ENCODE measurements at regions of chr14 and their contacts with region 1.

Region 1: GRCh38 chr14:102774391-102775153 is 2.7 kb upstream of the TRAF3 start:
- DNase-seq: peak; percentile 96
- ATAC-seq: peak; percentile 76
- H3K4me3 ChIP-seq: peak overlapping the region; percentile 35; the same call in 1 of the 2 replicates
- H3K27ac ChIP-seq: peak overlapping the region; percentile 89
- H3K4me1 ChIP-seq: peaks cover 40% of the 10 kb centered on the region
- H3K27me3 ChIP-seq: no peaks in the 10 kb centered on the region
- CTCF ChIP-seq: peak; percentile 77 to 86 (median 85)
- EP300 ChIP-seq: peak; percentile 32 to 75; a peak in 2 of 4 replicates
- POLR2A ChIP-seq: no peak
- RAD21 ChIP-seq: peak; percentile 77

Region 2: DNA sequence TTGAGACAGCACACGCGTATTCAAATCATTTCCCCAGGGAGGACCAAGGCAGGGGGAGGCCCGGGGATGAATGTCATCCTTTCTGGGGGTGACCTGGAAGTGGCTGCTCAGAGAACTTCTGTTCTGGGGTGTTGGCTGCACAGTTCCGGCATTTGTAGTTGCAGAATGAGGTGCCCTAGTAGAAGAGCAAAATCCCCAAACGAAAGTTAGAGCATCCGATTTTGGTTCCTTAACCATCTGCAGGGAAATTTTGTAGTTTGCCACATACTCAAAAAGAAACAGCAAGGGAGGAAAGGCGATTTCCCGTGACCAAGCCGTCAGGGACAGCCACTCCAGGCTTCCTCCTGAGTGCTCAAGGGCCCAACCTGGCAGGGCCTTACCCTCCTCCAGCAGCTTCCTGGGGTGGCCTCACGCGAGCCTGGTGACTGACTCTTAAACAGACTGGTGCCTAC is 10.3 kb before region 1 on chr14:
- CTCF ChIA-PET with region 1: interaction called, 23 read pairs
- POLR2A ChIA-PET with region 1: interaction called, 12 read pairs
- RAD21 ChIA-PET with region 1: interaction called, 24 read pairs
- SMC1A ChIA-PET with region 1: interaction called, 22 read pairs
- in situ Hi-C with region 1: no loop called
- intact Hi-C with region 1: loop called (anchors 1 kb)
- DNase-seq: peak; percentile 97
- ATAC-seq: peak; percentile 76
- H3K4me3 ChIP-seq: no peak overlapping the region
- H3K27ac ChIP-seq: peak overlapping the region; percentile 92
- H3K4me1 ChIP-seq: peaks cover 51% of the 10 kb centered on the region
- H3K27me3 ChIP-seq: no peaks in the 10 kb centered on the region
- CTCF ChIP-seq: no peak
- EP300 ChIP-seq: peak; percentile 51 to 73; a peak in 2 of 4 replicates
- POLR2A ChIP-seq: no peak
- RAD21 ChIP-seq: no peak

Region 3: DNA sequence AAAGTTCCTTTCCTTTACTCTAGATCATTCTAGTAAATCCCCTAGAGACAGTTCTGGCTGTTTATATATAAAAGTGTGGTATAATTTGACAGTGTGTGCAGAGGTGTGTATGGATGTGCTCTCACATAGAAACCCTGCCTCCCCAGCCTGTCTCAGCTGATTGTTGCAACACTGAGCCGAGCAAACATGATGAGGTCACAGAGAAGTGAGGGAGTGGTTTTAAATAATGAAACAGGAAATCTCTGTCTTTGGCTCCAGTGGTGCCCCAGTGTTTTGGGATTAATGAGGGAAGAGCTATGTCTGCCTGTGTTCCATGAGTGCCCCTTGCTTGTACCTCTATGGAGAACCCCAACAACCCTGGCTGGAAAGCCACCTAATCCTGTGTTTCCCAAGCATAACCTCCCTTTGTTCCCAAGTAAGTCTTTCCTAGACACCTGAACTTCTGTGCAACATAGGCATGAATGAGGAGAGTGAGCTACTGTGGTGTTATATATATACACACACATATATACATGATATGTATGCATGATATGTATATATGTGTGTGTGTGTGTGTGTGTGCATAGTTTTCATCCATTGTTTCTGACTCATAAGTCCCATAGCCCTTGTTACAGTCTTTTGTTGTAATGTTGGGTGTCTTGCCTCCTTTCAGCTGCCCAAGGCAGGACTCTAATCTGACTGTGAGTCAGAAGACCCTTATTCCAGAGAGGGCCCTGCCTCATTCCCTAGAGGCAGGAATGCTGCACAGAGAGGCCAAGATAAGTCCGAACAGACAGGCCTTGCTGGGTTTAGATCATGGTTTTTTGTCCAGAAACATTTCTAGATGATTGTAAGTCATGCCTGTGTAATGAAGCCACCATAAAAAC is 20.7 kb after region 1 on chr14:
- CTCF ChIA-PET with region 1: interaction called, 7 read pairs
- POLR2A ChIA-PET with region 1: interaction called, 8 read pairs
- RAD21 ChIA-PET with region 1: interaction called, 20 read pairs
- SMC1A ChIA-PET with region 1: interaction called, 12 read pairs
- in situ Hi-C with region 1: no loop called
- intact Hi-C with region 1: no loop called
- DNase-seq: no peak
- ATAC-seq: peak; percentile 66
- H3K4me3 ChIP-seq: no peak overlapping the region
- H3K27ac ChIP-seq: peak overlapping the region; percentile 42
- H3K4me1 ChIP-seq: peaks cover 57% of the 10 kb centered on the region
- H3K27me3 ChIP-seq: no peaks in the 10 kb centered on the region
- CTCF ChIP-seq: no peak
- EP300 ChIP-seq: 0 out of 4 replicates have a peak, but pooled peaks of 1 of the 2 experiments have one; percentile 10
- POLR2A ChIP-seq: no peak
- RAD21 ChIP-seq: no peak

Region 4: GRCh38 chr14:102900631-102901571 is 126.3 kb after region 1 on chr14:
- CTCF ChIA-PET with region 1: interaction called, 18 read pairs
- POLR2A ChIA-PET with region 1: interaction called, 7 read pairs
- RAD21 ChIA-PET with region 1: no interaction called
- SMC1A ChIA-PET with region 1: interaction called, 10 read pairs
- in situ Hi-C with region 1: no loop called
- intact Hi-C with region 1: loop called (anchors 5 kb)
- DNase-seq: no peak
- ATAC-seq: peak; percentile 76
- H3K4me3 ChIP-seq: peak overlapping the region; percentile 43
- H3K27ac ChIP-seq: peak overlapping the region; percentile 98
- H3K4me1 ChIP-seq: peaks cover 59% of the 10 kb centered on the region
- H3K27me3 ChIP-seq: no peaks in the 10 kb centered on the region
- CTCF ChIP-seq: no peak
- EP300 ChIP-seq: no peak; a peak in 2 of 4 replicates
- POLR2A ChIP-seq: peak; percentile 61
- RAD21 ChIP-seq: no peak

Region 5: DNA sequence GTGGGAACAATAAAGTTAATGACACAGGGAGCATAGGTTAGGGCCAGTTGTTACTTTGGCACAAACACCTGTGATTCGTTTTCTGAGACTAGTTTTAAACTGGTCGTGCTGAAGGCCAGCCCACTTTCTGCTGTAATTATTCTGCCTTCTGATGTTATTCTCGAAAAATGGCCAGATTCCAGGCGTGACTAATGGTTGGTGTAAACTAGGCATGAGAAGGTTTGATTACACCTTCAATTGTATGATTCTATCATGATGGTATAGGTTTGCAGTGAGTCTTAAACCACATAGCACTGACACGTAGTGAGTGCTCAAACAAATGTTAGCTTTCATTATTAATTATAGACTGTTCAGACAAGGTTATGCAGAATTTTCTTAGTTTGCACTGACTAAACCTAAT is 709.0 kb after region 1 on chr14:
- CTCF ChIA-PET with region 1: no interaction called
- POLR2A ChIA-PET with region 1: no interaction called
- RAD21 ChIA-PET with region 1: no interaction called
- SMC1A ChIA-PET with region 1: no interaction called
- in situ Hi-C with region 1: no loop called
- intact Hi-C with region 1: no loop called
- DNase-seq: no peak
- ATAC-seq: no peak
- H3K4me3 ChIP-seq: no peak overlapping the region
- H3K27ac ChIP-seq: no peak overlapping the region
- H3K4me1 ChIP-seq: peaks cover 9% of the 10 kb centered on the region
- H3K27me3 ChIP-seq: no peaks in the 10 kb centered on the region
- CTCF ChIP-seq: no peak
- EP300 ChIP-seq: no peak
- POLR2A ChIP-seq: no peak
- RAD21 ChIP-seq: no peak